H1 (cell line): ENCODE measurements at regions of chr1 and their contacts with region 1.

Region 1: DNA sequence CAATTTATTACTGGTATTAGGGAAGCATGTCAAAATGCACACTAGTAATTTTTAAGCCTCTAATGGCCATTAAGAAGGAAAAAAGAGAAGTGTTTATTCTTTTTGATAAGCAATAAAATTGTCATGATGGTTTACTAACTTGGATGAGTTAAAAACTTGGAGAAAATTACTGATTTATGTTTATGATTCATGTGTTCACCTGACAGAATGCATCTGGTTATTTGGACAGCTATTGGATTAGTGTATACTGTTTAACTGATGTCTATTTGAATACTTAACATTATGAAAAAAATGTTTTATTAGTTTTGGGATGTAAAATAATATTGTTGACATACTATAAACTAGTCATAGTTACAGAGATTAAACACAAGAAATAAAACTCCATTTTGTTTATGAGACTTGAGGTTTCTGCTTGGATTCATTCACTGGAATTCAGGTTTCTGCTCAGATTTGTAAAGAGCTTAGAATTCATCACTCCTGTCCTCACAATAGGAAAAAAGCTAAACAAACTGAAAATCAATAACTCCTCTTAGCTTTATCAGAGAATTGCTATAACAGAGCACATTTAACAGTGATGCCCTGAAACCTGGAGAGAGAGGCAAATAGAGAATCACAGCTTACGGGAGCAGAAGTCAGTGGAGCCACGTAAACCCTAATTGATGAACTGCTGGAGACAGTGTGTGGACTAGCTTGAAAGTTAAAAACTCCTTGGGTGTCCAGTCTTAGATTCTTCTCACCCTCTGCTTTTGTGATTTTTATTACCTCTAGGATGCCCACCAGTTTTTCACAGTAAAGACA is 56.7 kb downstream of the RALGPS2 start:
- DNase-seq: no peak
- H3K4me3 ChIP-seq: no peak overlapping the region
- H3K27ac ChIP-seq: no peak overlapping the region
- H3K4me1 ChIP-seq: no peaks in the 10 kb centered on the region
- H3K27me3 ChIP-seq: no peaks in the 10 kb centered on the region
- CTCF ChIP-seq: no peak
- EP300 ChIP-seq: no peak
- POLR2A ChIP-seq: no peak
- RAD21 ChIP-seq: no peak

Region 2: GRCh38 chr1:178768423-178768822 is 13.3 kb before region 1 on chr1:
- CTCF ChIA-PET with region 1: interaction called, 11 read pairs
- POLR2A ChIA-PET with region 1: no interaction called
- DNase-seq: peak in 1 of 2 experiments; percentile 50
- H3K4me3 ChIP-seq: no peak overlapping the region
- H3K27ac ChIP-seq: no peak overlapping the region
- H3K4me1 ChIP-seq: peaks cover 0 to 4% (median 0%) of the 10 kb centered on the region in 4 experiments; a peak in 1 of 7 replicates
- H3K27me3 ChIP-seq: no peaks in the 10 kb centered on the region
- CTCF ChIP-seq: peak; percentile 38 to 89 (median 83)
- EP300 ChIP-seq: no peak
- POLR2A ChIP-seq: no peak
- RAD21 ChIP-seq: peak; percentile 70 to 83